ENCODE measurements at regions of chr15 and their contacts with region 1.

Region 1: DNA sequence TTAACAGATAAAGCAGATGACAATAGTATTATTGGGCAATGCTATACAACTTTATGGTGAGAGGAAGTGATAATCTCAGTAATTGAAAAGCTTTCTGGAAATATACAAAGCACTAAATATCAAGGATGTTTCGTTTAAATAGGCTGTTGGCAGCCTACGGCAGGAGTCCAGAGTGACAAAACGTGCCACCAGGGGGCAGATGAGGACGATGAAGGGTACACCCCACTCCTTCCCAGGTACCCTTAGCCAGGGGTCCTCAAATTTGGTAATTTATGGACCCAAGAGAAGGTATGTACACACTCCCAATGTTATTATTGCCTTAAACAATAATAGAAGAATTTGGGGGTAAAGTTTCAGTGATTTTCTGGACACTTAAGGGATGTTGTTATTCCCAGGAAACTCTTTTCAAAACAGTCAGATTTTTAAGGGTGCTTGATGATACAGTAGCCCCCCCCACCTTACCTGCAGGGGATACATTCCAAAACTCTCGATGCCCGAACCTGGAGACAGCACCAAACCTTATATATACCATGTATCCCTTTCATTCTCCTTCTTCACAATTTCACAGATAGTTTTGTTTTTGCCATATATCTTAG is 1.4 kb upstream of the MAGEL2 start:
- DNase-seq: peak; percentile 33
- H3K4me3 ChIP-seq: no peak overlapping the region
- H3K27ac ChIP-seq: no peak overlapping the region
- H3K4me1 ChIP-seq: no peaks in the 10 kb centered on the region
- H3K27me3 ChIP-seq: no peaks in the 10 kb centered on the region
- CTCF ChIP-seq: peak; percentile 41

Region 2: DNA sequence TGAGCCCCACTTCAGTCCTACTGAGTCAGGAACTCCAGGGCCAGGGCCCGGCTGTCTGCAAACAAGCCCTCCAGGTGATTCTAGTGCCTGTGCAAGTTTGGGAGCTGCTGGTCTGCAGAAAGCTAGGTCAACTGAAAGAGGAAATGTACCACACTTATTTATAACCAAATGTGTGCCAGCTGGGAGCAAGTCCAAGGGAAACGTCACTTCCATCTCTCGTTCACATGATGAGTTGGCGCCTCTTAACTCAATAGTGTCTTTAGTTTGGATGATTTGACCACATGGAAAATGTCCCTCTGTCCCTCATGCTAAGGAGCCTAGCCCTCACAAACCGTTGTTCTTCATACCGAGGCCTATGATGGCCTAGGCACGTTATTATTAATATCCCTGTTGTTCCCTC is 251.2 kb before region 1 on chr15:
- intact Hi-C with region 1: no loop called
- DNase-seq: no peak
- H3K4me3 ChIP-seq: no peak overlapping the region
- H3K27ac ChIP-seq: no peak overlapping the region
- H3K4me1 ChIP-seq: no peaks in the 10 kb centered on the region
- H3K27me3 ChIP-seq: no peaks in the 10 kb centered on the region
- CTCF ChIP-seq: no peak

Region 3: GRCh38 chr15:23857028-23857641 is 208.1 kb after region 1 on chr15:
- intact Hi-C with region 1: loop called (anchors 5 kb)
- DNase-seq: peak; percentile 51
- H3K4me3 ChIP-seq: no peak overlapping the region
- H3K27ac ChIP-seq: no peak overlapping the region
- H3K4me1 ChIP-seq: no peaks in the 10 kb centered on the region
- H3K27me3 ChIP-seq: no peaks in the 10 kb centered on the region
- CTCF ChIP-seq: peak; percentile 33